PC-9 (cell line): ENCODE measurements at regions of chr1 and their contacts with region 1.

Region 1: DNA sequence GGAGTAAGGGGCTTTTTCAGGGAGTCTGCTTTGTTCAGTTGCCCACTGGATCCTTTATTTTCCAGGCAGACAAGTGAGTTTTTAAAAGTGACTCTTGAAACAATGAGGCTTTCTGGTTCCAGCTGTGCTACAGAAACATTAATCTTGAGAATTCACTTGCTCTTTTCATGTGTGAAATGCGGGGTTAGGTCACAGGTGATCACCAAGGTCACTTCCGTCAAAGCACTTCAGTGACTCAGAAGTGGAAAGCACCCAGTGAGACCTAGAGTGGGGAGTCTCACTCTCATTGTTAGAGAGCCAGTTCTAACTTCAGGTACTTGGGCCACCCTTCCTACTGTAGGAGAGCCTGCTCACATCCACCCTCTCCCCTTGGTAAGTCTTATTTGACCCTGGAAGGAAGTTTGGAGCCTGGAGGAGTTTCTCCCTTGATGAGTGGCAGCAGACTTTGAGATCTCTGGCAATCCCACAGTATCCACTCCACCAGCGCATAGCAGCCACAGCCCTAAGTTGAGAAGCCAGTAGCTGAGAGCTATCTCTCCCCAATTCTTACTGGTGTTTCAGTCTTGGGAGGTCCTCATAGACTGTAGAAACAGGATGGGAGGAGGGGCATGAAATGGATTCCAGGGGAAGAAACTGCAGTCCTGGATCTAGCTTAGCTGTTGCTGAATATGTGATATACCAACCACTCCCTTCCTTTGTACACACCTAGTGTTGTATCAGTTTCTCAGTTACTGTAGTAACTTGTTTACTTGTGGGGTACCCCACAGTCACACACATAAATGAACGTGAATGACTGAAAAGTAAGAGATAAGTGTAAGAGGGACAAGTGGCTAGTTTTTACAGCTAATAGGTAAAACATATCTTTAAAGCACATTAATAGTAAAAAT is 3.1 kb downstream of the TACSTD2 start:
- DNase-seq: peak; percentile 62 to 88
- H3K4me3 ChIP-seq: peak overlapping the region; percentile 97
- H3K27ac ChIP-seq: peak overlapping the region; percentile 99
- H3K4me1 ChIP-seq: peaks cover 61% of the 10 kb centered on the region
- H3K27me3 ChIP-seq: no peaks in the 10 kb centered on the region
- CTCF ChIP-seq: no peak

Region 2: GRCh38 chr1:58515794-58516401 is 58.0 kb before region 1 on chr1:
- CTCF ChIA-PET with region 1: no interaction called
- POLR2A ChIA-PET with region 1: no interaction called
- intact Hi-C with region 1: loop called (anchors 2 kb)
- DNase-seq: peak; percentile 25 to 61
- H3K4me3 ChIP-seq: no peak overlapping the region
- H3K27ac ChIP-seq: no peak overlapping the region
- H3K4me1 ChIP-seq: no peaks in the 10 kb centered on the region
- H3K27me3 ChIP-seq: no peaks in the 10 kb centered on the region
- CTCF ChIP-seq: peak; percentile 86

Region 3: DNA sequence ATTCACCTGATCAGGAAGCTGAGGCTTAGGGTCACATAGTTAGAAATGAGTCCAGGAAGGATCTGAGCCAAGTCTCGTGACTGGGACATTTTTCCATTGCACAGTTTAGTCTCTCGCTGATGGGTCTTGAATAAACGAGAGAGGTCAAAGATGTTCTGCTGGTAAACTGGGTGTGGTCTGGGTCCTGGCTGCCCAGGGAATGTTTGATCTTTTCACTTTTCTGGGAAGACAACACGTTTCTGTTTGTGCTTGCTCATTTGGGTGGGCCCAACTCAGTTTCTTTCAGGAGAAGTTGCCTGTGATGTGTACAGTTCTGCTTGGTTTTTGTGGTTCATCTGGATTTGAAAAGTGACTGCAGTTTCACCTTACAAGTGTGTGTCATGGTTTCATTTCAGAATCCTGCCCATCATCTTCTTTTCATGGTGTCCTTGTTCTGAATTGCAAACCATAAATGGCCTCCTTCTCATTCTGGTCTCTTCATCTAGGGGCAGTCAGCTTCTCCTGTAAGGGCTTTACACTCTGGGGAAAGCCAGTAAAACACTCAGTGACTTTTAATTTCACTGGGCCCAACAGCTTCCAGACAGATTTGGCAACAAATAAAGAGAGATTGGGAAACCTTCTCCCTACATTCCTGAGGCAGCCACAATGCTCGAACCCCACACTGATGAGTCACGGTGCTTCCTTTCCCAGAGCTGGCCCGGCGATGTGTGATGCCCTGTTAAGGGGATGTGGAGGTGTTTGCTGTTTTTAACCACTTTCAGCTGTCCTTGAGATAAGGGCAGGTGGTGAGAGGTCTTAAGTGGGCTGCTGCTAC is 10.3 kb after region 1 on chr1:
- CTCF ChIA-PET with region 1: no interaction called
- POLR2A ChIA-PET with region 1: interaction called, 4 read pairs
- intact Hi-C with region 1: loop called (anchors 1 kb)
- DNase-seq: peak; percentile 90 to 96
- H3K4me3 ChIP-seq: peak overlapping the region; percentile 36; the same call in 1 of the 2 replicates
- H3K27ac ChIP-seq: peak overlapping the region; percentile 99
- H3K4me1 ChIP-seq: peaks cover 45% of the 10 kb centered on the region
- H3K27me3 ChIP-seq: no peaks in the 10 kb centered on the region
- CTCF ChIP-seq: no peak

Region 4: GRCh38 chr1:58618303-58618702 is 44.4 kb after region 1 on chr1:
- CTCF ChIA-PET with region 1: interaction called, 8 read pairs
- POLR2A ChIA-PET with region 1: interaction called, 7 read pairs
- intact Hi-C with region 1: loop called (anchors 1 kb)
- DNase-seq: peak; percentile 70 to 89
- H3K4me3 ChIP-seq: no peak overlapping the region
- H3K27ac ChIP-seq: peak overlapping the region; percentile 76
- H3K4me1 ChIP-seq: peaks cover 46% of the 10 kb centered on the region
- H3K27me3 ChIP-seq: no peaks in the 10 kb centered on the region
- CTCF ChIP-seq: no peak

Region 5: DNA sequence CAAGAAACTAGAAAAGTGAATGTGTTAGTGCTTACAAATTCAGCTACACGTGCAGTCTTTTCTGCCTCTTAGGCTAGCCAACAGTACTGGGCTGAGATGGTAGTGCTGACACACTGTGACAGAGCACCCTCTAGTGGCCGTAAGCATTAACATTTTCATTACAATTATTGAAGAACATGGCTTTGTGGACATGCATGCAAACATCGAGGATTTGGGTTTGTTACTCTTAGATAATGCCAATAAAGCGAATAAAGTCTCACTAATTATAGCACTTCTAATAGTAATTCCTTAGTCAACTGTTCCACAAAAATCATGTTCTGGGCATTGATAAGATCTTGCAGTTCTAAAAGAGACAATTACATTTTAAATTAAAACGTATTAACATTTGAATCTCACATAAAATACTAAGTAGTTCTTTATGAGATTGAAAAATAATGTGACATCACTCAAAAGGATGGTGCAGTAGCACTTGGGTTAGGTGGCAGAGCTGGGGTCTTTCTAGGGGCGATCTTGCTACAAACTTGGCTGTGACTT is 78.8 kb after region 1 on chr1:
- CTCF ChIA-PET with region 1: interaction called, 4 read pairs
- POLR2A ChIA-PET with region 1: interaction called, 5 read pairs
- intact Hi-C with region 1: loop called (anchors 1 kb)
- DNase-seq: peak; percentile 62 to 76
- H3K4me3 ChIP-seq: no peak overlapping the region
- H3K27ac ChIP-seq: peak overlapping the region; percentile 24
- H3K4me1 ChIP-seq: 0 out of 2 replicates have a peak, but pooled peaks cover 5% of the 10 kb centered on the region
- H3K27me3 ChIP-seq: no peaks in the 10 kb centered on the region
- CTCF ChIP-seq: peak; percentile 93